Calu3 (cell line): ENCODE measurements at regions of chr2 and their contacts with region 1.

Region 1: DNA sequence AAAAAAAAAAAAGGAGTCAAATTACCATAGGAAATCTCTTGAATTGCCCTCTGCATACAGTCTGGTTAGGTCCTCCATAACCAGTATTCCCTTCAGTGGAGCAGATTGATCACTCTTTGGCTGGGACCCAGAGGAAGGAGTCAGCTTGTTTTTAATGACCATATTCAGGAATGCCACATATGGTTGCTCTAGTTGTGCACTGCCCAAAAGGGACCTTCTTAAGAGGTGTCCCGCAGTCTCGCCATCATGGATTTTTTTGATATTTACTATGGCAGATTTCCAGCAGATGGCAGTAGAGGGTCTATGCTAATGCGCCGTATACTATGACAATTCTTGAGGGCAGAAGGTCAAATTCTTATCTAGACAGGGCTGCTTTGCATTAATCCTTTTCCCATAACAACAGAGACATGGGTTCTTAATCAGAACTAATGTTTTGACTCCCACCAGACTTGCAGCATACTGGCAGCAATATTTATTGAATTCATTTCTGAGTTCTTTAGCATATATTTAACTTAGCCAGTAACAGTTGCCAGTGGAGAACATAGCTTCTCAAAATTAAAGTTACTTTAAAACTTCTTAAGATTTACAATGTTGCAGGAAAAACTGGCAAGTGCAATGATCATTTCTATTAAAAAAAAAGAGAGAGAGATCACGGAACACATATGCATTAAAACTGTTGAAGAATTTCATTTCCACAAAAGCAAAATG is 31.8 kb upstream of the INPP4A start:
- DNase-seq: peak; percentile 61
- H3K4me3 Mint-ChIP-seq: no peak overlapping the region
- H3K27ac Mint-ChIP-seq: no peak overlapping the region
- H3K4me1 Mint-ChIP-seq: no peaks in the 10 kb centered on the region
- H3K27me3 Mint-ChIP-seq: no peaks in the 10 kb centered on the region
- CTCF ChIP-seq: peak; percentile 73

Region 2: DNA sequence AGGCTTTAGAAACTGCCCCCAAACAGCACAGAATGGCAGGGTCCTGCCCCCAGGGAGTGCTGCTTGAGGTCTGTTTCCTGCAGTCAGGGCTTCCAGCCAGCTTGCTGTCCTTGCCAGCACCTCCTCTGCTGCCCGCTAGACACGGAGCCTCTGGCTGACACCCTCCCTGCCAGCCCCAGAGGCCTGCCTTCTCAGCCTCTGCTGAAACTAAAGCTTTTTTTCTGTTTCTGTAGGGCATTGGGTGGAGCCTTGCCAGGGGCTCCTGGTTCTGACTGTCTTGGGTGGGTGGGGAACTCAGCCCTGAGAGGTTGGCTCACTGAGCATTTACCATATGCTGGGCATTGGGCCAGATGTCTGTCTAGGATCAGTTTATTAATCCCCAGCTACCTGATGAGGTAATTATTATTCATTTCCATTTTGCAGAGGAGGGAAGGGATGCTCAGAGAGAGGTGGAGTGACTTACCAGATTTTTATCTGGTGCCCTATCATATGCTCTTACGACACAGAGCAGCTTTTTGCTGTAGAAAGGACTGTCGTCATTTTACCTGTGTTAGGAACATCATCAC is 67.1 kb after region 1 on chr2:
- CTCF ChIA-PET with region 1: interaction called, 4 read pairs
- intact Hi-C with region 1: loop called (anchors 5 kb)
- DNase-seq: peak; percentile 70
- H3K4me3 Mint-ChIP-seq: no peak overlapping the region
- H3K27ac Mint-ChIP-seq: peak overlapping the region; percentile 36
- H3K4me1 Mint-ChIP-seq: peaks cover 95% of the 10 kb centered on the region
- H3K27me3 Mint-ChIP-seq: no peaks in the 10 kb centered on the region
- CTCF ChIP-seq: no peak

Region 3: GRCh38 chr2:98518090-98518489 is 105.2 kb after region 1 on chr2:
- CTCF ChIA-PET with region 1: no interaction called
- intact Hi-C with region 1: loop called (anchors 1 kb)
- DNase-seq: peak; percentile 56
- H3K4me3 Mint-ChIP-seq: no peak overlapping the region
- H3K27ac Mint-ChIP-seq: no peak overlapping the region
- H3K4me1 Mint-ChIP-seq: no peaks in the 10 kb centered on the region
- H3K27me3 Mint-ChIP-seq: no peaks in the 10 kb centered on the region
- CTCF ChIP-seq: peak; percentile 42

Region 4: GRCh38 chr2:98601532-98602132 is 188.7 kb after region 1 on chr2:
- CTCF ChIA-PET with region 1: no interaction called
- intact Hi-C with region 1: loop called (anchors 1 kb)
- DNase-seq: peak; percentile 44
- H3K4me3 Mint-ChIP-seq: no peak overlapping the region
- H3K27ac Mint-ChIP-seq: no peak overlapping the region
- H3K4me1 Mint-ChIP-seq: peaks cover 6% of the 10 kb centered on the region
- H3K27me3 Mint-ChIP-seq: no peaks in the 10 kb centered on the region
- CTCF ChIP-seq: peak; percentile 65